ENCODE measurements at regions of chr11 and their contacts with region 1.

Region 1: GRCh38 chr11:94417386-94417987 is 16.3 kb upstream of the GPR83 start:
- DNase-seq: peak; percentile 19
- H3K4me3 ChIP-seq: no peak overlapping the region
- H3K27ac ChIP-seq: no peak overlapping the region
- H3K4me1 ChIP-seq: no peaks in the 10 kb centered on the region
- CTCF ChIP-seq: peak; percentile 72

Region 2: DNA sequence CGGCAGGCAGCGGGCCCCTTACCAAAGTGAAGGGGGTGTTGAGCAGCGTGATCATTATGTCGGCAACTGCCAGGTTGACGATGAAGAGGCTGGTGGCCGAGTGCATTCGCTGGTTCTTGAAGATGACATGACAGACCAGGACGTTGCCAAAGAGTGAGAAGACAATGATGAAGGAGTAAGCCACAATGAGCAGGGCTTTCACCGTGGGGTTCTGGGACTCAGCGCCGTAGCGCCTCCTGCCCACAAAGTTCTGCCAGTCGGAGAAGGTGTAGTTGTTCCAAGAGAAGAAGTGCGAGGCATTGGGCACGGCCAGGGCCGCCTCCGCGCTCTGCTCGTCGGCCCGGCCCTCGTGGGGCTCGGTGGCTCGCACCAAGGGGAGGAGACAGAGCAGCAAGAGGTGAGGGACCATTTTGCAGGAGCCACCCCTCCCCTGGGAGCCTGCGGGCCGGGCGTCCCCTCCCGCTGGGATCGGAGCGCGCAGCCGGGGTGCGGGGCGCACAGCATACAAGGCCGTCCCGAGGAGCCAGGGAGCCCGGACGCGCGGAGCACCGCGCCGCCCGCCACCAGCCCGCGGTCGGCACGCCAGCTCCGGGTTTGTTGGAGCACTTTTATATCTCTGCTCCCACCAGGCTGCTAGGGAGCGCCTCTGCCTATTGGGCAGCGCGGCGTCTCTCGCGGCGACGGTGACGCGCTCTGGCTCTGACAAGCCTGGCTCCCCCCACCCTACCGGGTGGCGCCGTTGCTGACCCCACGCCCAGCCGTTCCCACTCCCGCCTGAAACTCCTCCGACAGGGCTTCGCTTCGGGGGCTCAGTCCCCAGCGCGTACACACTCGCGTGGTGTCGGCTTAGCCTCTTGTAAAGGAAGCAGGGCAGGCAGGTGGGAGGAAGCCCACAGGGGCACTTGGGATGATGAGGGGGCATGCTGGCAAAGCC is 16.4 kb before region 1 on chr11 and contains the start of gene GPR83:
- CTCF ChIA-PET with region 1: no interaction called
- POLR2A ChIA-PET with region 1: no interaction called
- intact Hi-C with region 1: no loop called
- DNase-seq: no peak
- H3K4me3 ChIP-seq: no peak within 1 kb of the TSS
- H3K27ac ChIP-seq: no peak within 1 kb of the TSS
- H3K4me1 ChIP-seq: no peaks in the 10 kb centered on the region
- CTCF ChIP-seq: no peak
- total RNA-seq, gene GPR83: 0.03 TPM in 2 replicates

Region 3: DNA sequence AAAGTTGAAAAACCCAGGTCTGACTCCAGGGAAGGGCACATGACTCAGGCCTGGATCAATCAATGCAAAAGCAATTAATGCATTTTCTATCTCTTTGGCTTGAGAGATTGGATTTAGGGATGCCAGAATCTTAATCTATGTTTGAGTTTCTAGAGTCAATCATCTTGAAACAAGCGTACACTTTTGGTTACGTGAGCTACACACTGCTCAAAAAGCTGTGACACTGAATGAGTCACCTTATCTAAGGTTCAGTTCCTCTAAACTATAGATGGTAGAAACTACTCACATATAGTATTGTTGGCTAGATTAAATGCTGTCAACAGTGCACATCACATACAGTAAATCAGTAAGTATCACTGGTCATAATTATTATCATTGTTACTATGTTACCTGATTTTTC is 51.9 kb after region 1 on chr11:
- CTCF ChIA-PET with region 1: interaction called, 10 read pairs
- POLR2A ChIA-PET with region 1: no interaction called
- intact Hi-C with region 1: no loop called
- DNase-seq: no peak
- H3K4me3 ChIP-seq: no peak overlapping the region
- H3K27ac ChIP-seq: no peak overlapping the region
- H3K4me1 ChIP-seq: no peaks in the 10 kb centered on the region
- CTCF ChIP-seq: no peak

Region 4: DNA sequence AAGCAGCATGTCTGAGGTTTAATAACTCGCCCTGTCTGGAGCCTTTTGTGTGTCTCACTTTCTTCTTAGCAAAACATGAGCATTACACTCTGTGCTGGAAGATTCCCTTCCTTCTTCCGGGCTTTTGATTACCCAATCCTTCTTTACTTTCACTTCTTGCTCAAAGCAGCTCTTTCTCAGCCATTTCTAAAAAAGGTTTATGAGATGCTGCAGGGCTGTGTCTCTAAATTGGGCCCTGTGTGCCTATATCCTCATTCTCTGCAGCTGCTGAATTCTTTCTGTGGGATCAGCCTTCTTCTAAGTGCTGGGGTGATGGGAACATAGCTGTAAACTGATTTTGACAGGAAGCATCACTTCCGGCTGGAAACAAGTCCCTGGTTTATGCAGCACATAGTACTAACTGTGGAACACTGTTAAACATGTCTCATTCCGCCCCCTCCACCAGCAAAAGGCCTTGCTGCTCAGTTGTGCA is 221.5 kb after region 1 on chr11:
- CTCF ChIA-PET with region 1: no interaction called
- POLR2A ChIA-PET with region 1: no interaction called
- intact Hi-C with region 1: no loop called
- DNase-seq: no peak
- H3K4me3 ChIP-seq: no peak overlapping the region
- H3K27ac ChIP-seq: no peak overlapping the region
- H3K4me1 ChIP-seq: no peaks in the 10 kb centered on the region
- CTCF ChIP-seq: no peak

Region 5: DNA sequence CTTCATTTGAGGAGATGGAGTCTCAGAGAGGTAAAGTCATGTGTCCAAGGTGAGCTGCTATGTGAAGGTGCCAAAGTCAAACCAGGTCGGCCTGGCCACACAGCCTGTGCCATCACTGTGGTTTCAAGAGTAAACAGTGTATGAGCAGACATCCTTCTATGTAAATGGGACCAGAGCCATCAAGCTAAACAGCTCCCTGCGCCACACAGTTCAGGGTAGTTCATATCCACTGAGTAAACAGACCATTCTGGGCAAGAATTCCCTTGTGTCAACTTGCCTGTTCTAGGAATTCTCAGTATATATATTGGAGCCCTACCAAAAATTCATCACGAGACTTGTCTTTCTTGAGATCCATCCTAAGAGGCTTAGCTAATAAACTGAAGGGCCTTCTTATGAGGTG is 428.1 kb after region 1 on chr11:
- CTCF ChIA-PET with region 1: no interaction called
- POLR2A ChIA-PET with region 1: no interaction called
- intact Hi-C with region 1: no loop called
- DNase-seq: no peak
- H3K4me3 ChIP-seq: no peak overlapping the region
- H3K27ac ChIP-seq: no peak overlapping the region
- H3K4me1 ChIP-seq: no peaks in the 10 kb centered on the region
- CTCF ChIP-seq: no peak

Measured in OCI-LY7 (cell line).